B cell (primary cell): ENCODE measurements at regions of chr12 and their contacts with region 1.

Region 1: DNA sequence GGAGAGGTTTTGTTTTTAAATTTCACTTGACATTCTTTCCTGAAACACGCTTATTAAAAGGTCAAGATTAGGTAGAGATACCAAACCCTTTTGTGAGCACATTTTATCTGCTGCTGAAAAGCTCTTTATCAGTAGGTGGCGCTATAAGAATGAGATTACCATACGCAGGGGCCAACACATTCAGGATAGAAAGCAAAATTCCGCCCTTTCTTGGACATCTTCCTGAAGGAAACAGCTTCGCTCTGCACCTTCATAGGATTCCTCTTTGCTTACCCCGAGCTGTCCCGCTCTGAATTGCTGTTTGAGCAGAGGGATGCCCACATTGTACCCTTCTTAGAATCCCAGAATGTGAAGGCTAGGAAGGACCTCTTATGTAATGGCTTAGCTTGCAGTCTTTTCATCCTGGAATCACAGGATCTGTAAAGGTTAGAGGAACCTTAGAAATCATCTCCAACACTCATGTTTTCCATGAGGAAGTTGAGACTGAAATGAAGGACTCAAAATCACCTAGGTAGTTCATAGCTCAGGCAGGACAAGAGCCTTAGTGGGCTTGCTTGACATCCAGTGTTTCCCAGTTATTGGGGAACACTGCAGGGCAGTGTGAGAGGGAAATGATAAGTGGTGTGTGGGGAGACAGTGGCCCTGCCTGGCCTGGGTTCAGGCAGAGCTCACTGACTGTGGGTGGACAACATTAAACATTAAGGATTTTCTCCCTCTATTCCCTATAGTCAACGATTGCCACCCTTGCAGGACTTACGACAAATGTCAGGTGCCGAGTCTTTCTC is 38.7 kb upstream of the CRY1 start:
- DNase-seq: peak; percentile 56
- ATAC-seq: no peak
- H3K4me3 ChIP-seq: no peak overlapping the region
- H3K4me3 Mint-ChIP-seq: no peak overlapping the region
- H3K27ac ChIP-seq: no peak overlapping the region
- H3K27ac Mint-ChIP-seq: no peak overlapping the region
- H3K4me1 ChIP-seq: no peaks in the 10 kb centered on the region
- H3K4me1 Mint-ChIP-seq: no peaks in the 10 kb centered on the region
- H3K27me3 ChIP-seq: peaks cover 0 to 4% (median 0%) of the 10 kb centered on the region in 4 experiments
- H3K27me3 Mint-ChIP-seq: peaks cover 8% of the 10 kb centered on the region
- CTCF ChIP-seq: peak; percentile 77

Region 2: DNA sequence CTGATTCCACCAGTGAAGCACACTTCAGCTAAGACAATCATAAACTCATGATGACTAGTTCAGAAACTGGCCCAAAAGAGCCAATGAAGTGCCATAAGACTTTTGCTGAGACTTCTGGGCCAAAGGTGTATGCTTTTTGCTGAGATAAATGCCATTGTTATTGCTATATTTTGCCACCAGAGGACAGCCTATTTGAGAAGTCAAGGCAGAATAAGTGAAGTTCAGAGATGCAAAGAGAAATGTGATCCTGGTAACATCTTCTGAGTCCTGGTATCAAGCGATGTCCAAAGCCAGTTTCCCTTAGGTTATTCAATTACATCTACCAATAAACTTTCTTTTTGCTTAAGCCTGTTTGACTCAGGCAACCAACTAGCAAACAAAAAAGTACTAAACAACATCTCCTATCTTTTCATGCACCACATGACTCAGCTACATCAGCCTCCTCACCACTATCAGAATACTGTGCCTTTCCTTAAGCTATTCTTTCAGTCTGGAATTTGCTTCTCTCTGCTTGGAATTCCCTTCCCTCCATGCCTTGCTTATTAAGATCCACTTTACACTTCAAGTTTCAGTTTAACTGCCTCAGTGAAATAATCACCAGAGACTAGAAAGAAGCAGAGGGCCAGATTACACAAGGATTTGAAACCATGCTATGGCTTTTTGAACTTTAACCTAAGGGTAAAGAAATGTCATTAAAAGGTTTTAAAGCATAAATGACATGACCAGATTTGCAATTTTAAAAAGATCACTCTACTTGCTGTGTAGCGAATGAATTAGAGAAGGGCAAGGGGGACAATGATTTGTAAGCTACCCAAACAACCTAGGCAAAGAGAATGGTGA is 52.6 kb before region 1 on chr12:
- CTCF ChIA-PET with region 1: no interaction called
- POLR2A ChIA-PET with region 1: no interaction called
- intact Hi-C with region 1: no loop called
- DNase-seq: peak; percentile 30
- ATAC-seq: no peak
- H3K4me3 ChIP-seq: no peak overlapping the region
- H3K4me3 Mint-ChIP-seq: no peak overlapping the region
- H3K27ac ChIP-seq: no peak overlapping the region
- H3K27ac Mint-ChIP-seq: no peak overlapping the region
- H3K4me1 ChIP-seq: no peaks in the 10 kb centered on the region
- H3K4me1 Mint-ChIP-seq: no peaks in the 10 kb centered on the region
- H3K27me3 ChIP-seq: peaks cover 0 to 5% (median 0%) of the 10 kb centered on the region in 4 experiments
- H3K27me3 Mint-ChIP-seq: peaks cover 20% of the 10 kb centered on the region
- CTCF ChIP-seq: peak; percentile 62

Region 3: GRCh38 chr12:107105410-107105703 is 26.7 kb before region 1 on chr12:
- CTCF ChIA-PET with region 1: interaction called, 11 read pairs
- POLR2A ChIA-PET with region 1: no interaction called
- intact Hi-C with region 1: no loop called
- DNase-seq: no peak
- ATAC-seq: no peak
- H3K4me3 ChIP-seq: no peak overlapping the region
- H3K4me3 Mint-ChIP-seq: no peak overlapping the region
- H3K27ac ChIP-seq: no peak overlapping the region
- H3K27ac Mint-ChIP-seq: no peak overlapping the region
- H3K4me1 ChIP-seq: no peaks in the 10 kb centered on the region
- H3K4me1 Mint-ChIP-seq: no peaks in the 10 kb centered on the region
- H3K27me3 ChIP-seq: peaks cover 0 to 7% (median 6%) of the 10 kb centered on the region in 4 experiments
- H3K27me3 Mint-ChIP-seq: peaks cover 42% of the 10 kb centered on the region
- CTCF ChIP-seq: no peak

Region 4: DNA sequence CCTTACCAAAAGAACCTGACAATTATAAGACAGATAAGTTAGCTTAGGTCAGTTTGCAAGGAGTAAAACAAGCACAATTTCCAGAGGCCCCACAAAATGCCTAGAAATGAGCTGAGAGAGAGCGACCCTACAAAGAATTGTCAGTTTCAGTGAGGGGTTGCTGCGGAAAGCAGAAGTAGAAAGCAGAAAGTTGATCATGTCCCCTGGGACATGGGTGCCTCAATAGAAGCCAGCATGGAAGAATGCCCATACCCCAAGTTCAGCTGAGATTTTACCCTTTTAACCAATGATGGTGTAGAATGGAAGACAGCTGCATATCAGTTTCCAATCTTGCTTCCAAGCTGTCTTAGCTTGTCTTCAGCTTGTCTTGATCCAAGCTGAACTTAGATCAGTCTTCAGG is 16.9 kb before region 1 on chr12:
- CTCF ChIA-PET with region 1: interaction called, 13 read pairs
- POLR2A ChIA-PET with region 1: no interaction called
- intact Hi-C with region 1: no loop called
- DNase-seq: peak; percentile 56
- ATAC-seq: peak; percentile 53
- H3K4me3 ChIP-seq: no peak overlapping the region
- H3K4me3 Mint-ChIP-seq: no peak overlapping the region
- H3K27ac ChIP-seq: no peak overlapping the region
- H3K27ac Mint-ChIP-seq: no peak overlapping the region
- H3K4me1 ChIP-seq: peaks cover 8 to 11% of the 10 kb centered on the region in 2 donors
- H3K4me1 Mint-ChIP-seq: peaks cover 10% of the 10 kb centered on the region
- H3K27me3 ChIP-seq: peaks cover 0 to 12% (median 1%) of the 10 kb centered on the region in 4 experiments
- H3K27me3 Mint-ChIP-seq: peaks cover 38% of the 10 kb centered on the region
- CTCF ChIP-seq: no peak

Region 5: DNA sequence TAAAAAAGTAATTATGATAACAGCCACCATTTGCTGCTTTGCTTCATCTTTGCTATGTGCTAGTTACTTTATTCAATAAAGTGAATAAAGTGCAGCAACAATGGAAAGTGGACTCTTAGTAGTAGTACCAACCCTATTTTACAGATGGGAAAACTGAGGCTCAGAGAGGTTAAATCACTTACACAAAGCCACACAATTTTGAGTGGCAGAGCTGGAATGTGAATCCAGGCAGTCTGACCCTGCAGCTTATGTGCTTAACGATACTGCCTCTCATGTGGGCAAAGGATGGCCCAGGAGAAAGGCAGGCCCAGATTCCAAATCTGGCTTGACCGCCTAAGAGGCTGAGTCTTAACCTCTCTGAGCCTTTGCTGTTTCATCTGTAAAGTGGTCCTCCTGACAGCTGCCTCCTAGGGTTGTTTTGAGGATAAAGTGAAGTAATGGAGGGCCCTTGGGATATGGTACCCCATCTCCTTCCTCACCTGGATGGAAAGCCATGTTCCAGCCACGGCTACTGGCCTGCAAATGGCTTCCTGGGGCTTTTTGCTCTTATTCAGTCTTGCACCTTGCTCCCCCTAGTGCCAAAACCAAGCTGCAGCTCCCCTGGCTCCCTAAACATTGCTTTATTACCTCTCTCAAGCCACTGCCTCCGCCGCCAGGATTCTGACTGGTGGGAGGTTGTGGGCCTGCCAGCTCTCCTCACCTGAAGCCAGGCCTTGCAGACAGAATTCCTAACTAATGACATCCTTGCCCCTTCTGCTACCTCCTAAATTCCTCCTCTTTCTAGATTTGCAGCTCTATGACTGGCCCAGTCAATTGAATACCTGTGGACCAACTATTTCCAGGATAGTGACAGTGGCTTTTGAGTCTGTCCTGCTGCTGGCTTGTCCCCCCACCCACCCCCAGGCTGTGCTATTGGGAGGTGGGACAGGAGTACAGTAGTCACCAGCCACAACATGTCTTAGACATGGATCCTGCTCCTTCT is 270.3 kb after region 1 on chr12:
- CTCF ChIA-PET with region 1: interaction called, 3 read pairs
- POLR2A ChIA-PET with region 1: no interaction called
- intact Hi-C with region 1: loop called (anchors 10 kb)
- DNase-seq: peak; percentile 24
- ATAC-seq: no peak
- H3K4me3 ChIP-seq: no peak overlapping the region
- H3K4me3 Mint-ChIP-seq: no peak overlapping the region
- H3K27ac ChIP-seq: no peak overlapping the region
- H3K27ac Mint-ChIP-seq: no peak overlapping the region
- H3K4me1 ChIP-seq: no peaks in the 10 kb centered on the region
- H3K4me1 Mint-ChIP-seq: no peaks in the 10 kb centered on the region
- H3K27me3 ChIP-seq: no peaks in the 10 kb centered on the region
- H3K27me3 Mint-ChIP-seq: no peaks in the 10 kb centered on the region
- CTCF ChIP-seq: no peak

Region 6: DNA sequence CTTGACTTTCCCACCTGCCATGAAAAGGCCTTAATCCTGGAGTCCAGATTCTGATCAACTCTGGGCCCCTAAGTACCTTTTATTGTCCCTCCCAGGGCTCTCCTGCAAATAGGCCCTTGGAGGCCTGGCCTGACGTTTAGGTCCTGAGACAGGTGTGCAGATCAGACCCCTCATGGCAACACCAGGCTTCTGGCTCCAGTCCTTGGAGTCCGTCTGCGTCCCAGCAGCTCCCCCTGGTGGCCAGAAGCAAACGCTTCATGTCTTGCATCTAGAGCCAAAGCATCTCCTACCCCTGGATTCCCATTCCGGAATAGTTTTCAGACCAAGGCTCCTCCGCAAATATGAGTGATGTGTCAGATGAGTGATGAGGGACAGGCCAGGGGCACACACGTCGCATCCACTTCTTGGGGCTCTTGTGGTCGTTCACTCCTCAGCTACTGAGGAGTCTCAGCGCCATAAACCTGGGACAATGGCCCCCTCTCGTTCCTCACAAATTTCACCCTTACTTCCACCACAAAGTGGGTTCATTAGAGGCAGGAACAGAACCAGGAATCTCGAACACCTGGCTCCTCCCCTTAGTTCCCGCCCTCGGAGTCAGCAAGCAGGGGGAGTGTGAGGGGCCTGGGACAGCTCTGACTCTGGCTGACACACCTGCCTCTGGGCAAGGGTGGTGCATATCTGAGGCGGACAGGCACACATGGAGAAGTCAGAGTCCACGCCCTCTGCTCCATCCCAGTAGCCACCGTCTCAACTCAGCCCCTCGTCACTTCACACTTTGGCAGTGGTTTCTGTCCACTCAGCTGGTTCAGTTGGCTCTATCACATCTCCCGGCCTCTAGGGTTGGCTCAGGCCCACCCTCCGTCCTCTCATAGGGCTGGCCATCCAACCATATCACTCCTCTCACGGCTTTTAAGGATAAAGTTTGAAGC is 475.7 kb after region 1 on chr12:
- CTCF ChIA-PET with region 1: interaction called, 246 read pairs
- POLR2A ChIA-PET with region 1: no interaction called
- intact Hi-C with region 1: no loop called
- DNase-seq: peak; percentile 83
- ATAC-seq: peak; percentile 39
- H3K4me3 ChIP-seq: no peak overlapping the region
- H3K4me3 Mint-ChIP-seq: no peak overlapping the region
- H3K27ac ChIP-seq: no peak overlapping the region
- H3K27ac Mint-ChIP-seq: no peak overlapping the region
- H3K4me1 ChIP-seq: no peaks in the 10 kb centered on the region
- H3K4me1 Mint-ChIP-seq: no peaks in the 10 kb centered on the region
- H3K27me3 ChIP-seq: no peaks in the 10 kb centered on the region
- H3K27me3 Mint-ChIP-seq: no peaks in the 10 kb centered on the region
- CTCF ChIP-seq: peak; percentile 93